T-cell (primary cell): ENCODE measurements at regions of chrX and their contacts with region 1.

Region 1: GRCh38 chrX:112664924-112665323 is 14.8 kb downstream of the LHFPL1 start:
- DNase-seq: no peak
- ATAC-seq: no peak
- H3K4me3 ChIP-seq: no peak overlapping the region
- H3K4me3 Mint-ChIP-seq: no peak overlapping the region
- H3K27ac ChIP-seq: no peak overlapping the region
- H3K27ac Mint-ChIP-seq: no peak overlapping the region
- H3K4me1 ChIP-seq: no peaks in the 10 kb centered on the region
- H3K4me1 Mint-ChIP-seq: no peaks in the 10 kb centered on the region
- H3K27me3 ChIP-seq: no peaks in the 10 kb centered on the region
- H3K27me3 Mint-ChIP-seq: peaks cover 0 to 26% of the 10 kb centered on the region in 2 donors

Region 2: DNA sequence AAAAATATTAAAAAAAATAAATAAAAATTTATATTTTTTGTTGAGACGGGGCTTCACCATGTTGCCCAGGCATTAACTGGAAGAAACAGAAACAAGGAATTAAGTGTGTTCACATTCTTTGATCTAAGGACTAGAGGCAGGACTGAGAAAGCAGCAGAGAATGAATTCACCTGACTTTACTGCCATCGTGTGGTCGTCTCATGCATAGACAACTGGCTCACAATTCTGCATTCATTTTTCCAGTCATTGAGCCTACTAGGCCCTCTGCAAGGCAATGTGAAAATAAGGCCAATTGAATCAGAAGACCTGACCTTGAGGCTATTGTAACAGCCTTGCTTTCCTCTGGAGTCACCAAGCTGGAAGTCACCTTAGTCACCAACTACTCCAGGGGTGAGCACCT is 22.6 kb before region 1 on chrX:
- CTCF ChIA-PET with region 1: interaction called in 1 of 2 experiments, 3 read pairs
- POLR2A ChIA-PET with region 1: interaction called in 1 of 2 experiments, 16 read pairs
- DNase-seq: peak in 17 of 35 experiments; percentile 0 to 53 (median 4)
- ATAC-seq: peak; percentile 53 to 72 (median 60)
- H3K4me3 ChIP-seq: no peak overlapping the region
- H3K4me3 Mint-ChIP-seq: no peak overlapping the region
- H3K27ac ChIP-seq: no peak overlapping the region
- H3K27ac Mint-ChIP-seq: no peak overlapping the region
- H3K4me1 ChIP-seq: no peaks in the 10 kb centered on the region
- H3K4me1 Mint-ChIP-seq: peaks cover 4 to 10% (median 5%) of the 10 kb centered on the region in 3 donors
- H3K27me3 ChIP-seq: no peaks in the 10 kb centered on the region
- H3K27me3 Mint-ChIP-seq: peaks cover 0 to 19% of the 10 kb centered on the region in 2 donors

Region 3: GRCh38 chrX:112738347-112739033 is 73.6 kb after region 1 on chrX:
- CTCF ChIA-PET with region 1: no interaction called
- POLR2A ChIA-PET with region 1: no interaction called
- DNase-seq: no peak
- ATAC-seq: no peak
- H3K4me3 ChIP-seq: no peak overlapping the region
- H3K4me3 Mint-ChIP-seq: no peak overlapping the region
- H3K27ac ChIP-seq: no peak overlapping the region
- H3K27ac Mint-ChIP-seq: no peak overlapping the region
- H3K4me1 ChIP-seq: no peaks in the 10 kb centered on the region
- H3K4me1 Mint-ChIP-seq: peaks cover 2 to 5% (median 4%) of the 10 kb centered on the region in 3 donors
- H3K27me3 ChIP-seq: no peaks in the 10 kb centered on the region
- H3K27me3 Mint-ChIP-seq: peaks cover 0 to 23% of the 10 kb centered on the region in 2 donors

Region 4: DNA sequence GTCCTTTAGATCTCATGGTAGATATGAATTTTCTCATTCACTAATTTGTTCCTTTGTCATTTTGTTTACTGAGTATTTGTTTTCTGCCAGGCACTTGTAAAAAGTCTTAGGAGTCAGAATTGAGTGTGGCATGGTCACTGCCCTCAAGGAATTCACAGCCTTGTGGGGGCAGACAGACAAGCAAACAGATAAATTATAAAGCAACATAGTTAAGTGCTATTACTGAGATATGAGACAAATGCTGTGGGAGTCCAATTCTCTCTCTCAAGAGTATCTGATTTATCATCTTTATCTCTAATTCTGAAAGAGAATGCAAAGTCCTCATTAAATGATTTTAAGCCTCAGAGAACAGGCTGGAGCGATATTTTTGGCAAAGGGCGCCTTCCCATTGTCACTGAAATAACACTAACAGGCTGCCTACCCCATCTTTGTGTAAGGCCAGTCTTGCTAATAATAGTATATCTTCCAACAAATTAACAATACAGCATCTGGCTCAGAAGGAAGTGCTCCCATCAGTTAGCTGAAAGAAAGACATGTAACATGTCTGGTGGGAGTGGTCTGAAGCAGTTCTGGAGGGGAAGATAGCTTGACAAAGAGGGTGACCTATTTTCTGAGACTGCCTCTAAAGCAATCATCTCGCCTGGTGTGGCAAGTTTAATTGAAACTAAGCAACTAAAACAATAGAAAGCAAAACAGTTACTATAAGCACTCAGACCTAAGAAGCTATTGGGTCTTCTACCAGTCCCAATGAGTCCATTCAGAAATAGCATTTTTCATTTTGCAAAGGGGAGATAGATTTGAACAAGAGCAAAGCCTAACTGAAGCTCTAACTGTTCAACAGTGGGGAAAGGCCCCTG is 237.2 kb after region 1 on chrX:
- CTCF ChIA-PET with region 1: no interaction called
- POLR2A ChIA-PET with region 1: no interaction called
- DNase-seq: no peak
- ATAC-seq: no peak
- H3K4me3 ChIP-seq: no peak overlapping the region
- H3K4me3 Mint-ChIP-seq: no peak overlapping the region
- H3K27ac ChIP-seq: no peak overlapping the region
- H3K27ac Mint-ChIP-seq: no peak overlapping the region
- H3K4me1 ChIP-seq: no peaks in the 10 kb centered on the region
- H3K4me1 Mint-ChIP-seq: no peaks in the 10 kb centered on the region
- H3K27me3 ChIP-seq: no peaks in the 10 kb centered on the region
- H3K27me3 Mint-ChIP-seq: peaks cover 0 to 8% of the 10 kb centered on the region in 2 donors